ENCODE measurements at regions of chr18 and their contacts with region 1.

Region 1: GRCh38 chr18:35407871-35408481 is 30.8 kb upstream of the ZNF396 start:
- DNase-seq: peak; percentile 68
- H3K4me3 Mint-ChIP-seq: no peak overlapping the region
- H3K27ac Mint-ChIP-seq: peak overlapping the region; percentile 24
- H3K4me1 Mint-ChIP-seq: peaks cover 48% of the 10 kb centered on the region
- H3K27me3 Mint-ChIP-seq: no peaks in the 10 kb centered on the region
- CTCF ChIP-seq: peak; percentile 76

Region 2: DNA sequence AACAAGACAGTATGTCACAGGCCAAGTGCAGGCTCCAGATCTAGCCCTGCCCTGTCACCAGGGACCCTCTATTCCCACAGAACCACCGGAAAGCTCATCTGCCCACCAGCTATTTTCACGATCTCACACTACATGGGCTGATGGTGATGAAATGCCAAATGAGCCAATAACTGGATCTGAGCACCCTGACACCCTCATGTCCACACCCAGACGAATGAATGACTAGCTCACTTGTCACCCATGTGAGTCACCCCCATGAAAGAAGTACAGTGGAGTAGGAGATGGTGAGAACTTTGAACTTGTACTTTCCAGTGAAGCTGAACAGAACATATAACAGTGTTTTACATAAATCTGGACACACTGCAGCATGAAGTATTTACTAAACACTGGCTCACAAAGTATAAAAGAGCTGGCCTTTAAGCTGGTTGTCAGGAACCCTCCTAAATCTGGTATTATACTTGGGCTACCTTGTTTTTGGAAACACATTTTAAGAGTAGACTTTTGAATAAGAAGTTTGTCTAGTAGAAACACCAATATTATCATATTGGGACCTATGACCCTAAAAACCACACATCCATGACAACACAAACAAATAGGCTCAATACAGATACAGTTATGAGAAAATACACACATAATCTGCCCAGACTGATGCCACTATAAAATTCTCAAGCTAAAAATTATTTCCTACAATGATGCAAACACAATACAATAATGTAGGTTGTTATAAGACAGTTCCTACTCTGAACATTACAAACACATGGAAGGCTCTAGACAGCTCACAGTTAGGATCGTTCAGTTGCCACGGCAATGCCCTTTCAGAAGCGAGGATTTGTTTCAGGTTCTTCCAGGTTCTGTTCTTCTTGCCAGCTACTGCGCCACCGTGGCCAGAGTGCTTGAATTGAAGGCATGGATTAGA is 70.8 kb after region 1 on chr18:
- CTCF ChIA-PET with region 1: interaction called, 4 read pairs
- intact Hi-C with region 1: loop called (anchors 2 kb)
- DNase-seq: peak; percentile 78
- H3K4me3 Mint-ChIP-seq: peak overlapping the region; percentile 72
- H3K27ac Mint-ChIP-seq: peak overlapping the region; percentile 100
- H3K4me1 Mint-ChIP-seq: peaks cover 74% of the 10 kb centered on the region
- H3K27me3 Mint-ChIP-seq: no peaks in the 10 kb centered on the region
- CTCF ChIP-seq: no peak

Region 3: GRCh38 chr18:35497370-35498197 is 89.6 kb after region 1 on chr18 and contains the start of gene INO80C:
- CTCF ChIA-PET with region 1: no interaction called
- intact Hi-C with region 1: no loop called
- DNase-seq: peak; percentile 91
- H3K4me3 Mint-ChIP-seq: peak within 1 kb of the TSS; percentile 83
- H3K27ac Mint-ChIP-seq: peak within 1 kb of the TSS; percentile 98
- H3K4me1 Mint-ChIP-seq: peaks cover 32% of the 10 kb centered on the region
- H3K27me3 Mint-ChIP-seq: no peaks in the 10 kb centered on the region
- CTCF ChIP-seq: no peak
- total RNA-seq, gene INO80C: 27.0 and 41.9 TPM in 2 replicates

Region 4: DNA sequence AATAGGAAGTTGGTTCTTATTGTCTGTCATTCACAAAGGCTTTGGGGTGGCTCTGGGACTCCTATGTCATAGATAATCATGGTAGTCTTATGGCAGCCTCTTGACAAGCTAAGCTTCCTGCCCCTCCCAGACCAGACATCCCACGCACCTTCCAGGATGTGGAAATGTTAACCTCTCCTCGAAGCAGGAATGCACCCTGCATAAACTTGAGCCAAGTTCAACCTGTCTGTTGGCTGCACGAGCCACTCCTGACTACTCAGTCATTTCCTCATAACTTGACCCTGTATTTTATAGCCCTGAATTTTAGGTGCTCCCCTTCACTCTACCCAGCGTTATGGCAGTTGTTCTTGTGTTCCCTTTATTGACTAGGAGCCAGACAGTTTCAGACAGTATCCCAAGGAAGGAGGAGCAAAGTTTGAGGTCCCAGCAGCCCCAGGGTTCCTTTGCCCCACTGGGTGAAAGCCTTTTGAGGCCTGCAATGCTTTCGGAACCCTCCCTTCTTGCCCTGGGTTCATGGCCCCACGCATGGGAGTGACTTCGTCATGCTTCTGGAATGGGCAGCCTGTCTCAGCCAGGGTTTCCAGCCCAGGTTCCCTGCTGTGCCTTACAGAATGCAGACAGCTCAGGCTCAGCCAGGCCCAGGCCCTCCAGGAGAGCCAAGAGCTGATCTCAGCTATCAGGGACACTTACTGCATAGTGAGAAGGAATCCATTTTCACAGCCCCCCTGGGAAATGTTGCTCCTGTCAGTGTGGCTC is 105.4 kb after region 1 on chr18:
- CTCF ChIA-PET with region 1: no interaction called
- intact Hi-C with region 1: loop called (anchors 2 kb)
- DNase-seq: peak; percentile 64
- H3K4me3 Mint-ChIP-seq: peak overlapping the region; percentile 51
- H3K27ac Mint-ChIP-seq: peak overlapping the region; percentile 90
- H3K4me1 Mint-ChIP-seq: peaks cover 40% of the 10 kb centered on the region
- H3K27me3 Mint-ChIP-seq: no peaks in the 10 kb centered on the region
- CTCF ChIP-seq: no peak

Region 5: GRCh38 chr18:35580701-35581539 is 172.9 kb after region 1 on chr18:
- CTCF ChIA-PET with region 1: no interaction called
- intact Hi-C with region 1: loop called (anchors 5 kb)
- DNase-seq: peak; percentile 50
- H3K4me3 Mint-ChIP-seq: peak overlapping the region; percentile 65
- H3K27ac Mint-ChIP-seq: no peak overlapping the region
- H3K4me1 Mint-ChIP-seq: peaks cover 53% of the 10 kb centered on the region
- H3K27me3 Mint-ChIP-seq: no peaks in the 10 kb centered on the region
- CTCF ChIP-seq: no peak

Region 6: GRCh38 chr18:35616664-35617423 is 208.9 kb after region 1 on chr18:
- CTCF ChIA-PET with region 1: no interaction called
- intact Hi-C with region 1: loop called (anchors 2 kb)
- DNase-seq: peak; percentile 71
- H3K4me3 Mint-ChIP-seq: no peak overlapping the region
- H3K27ac Mint-ChIP-seq: no peak overlapping the region
- H3K4me1 Mint-ChIP-seq: peaks cover 11% of the 10 kb centered on the region
- H3K27me3 Mint-ChIP-seq: no peaks in the 10 kb centered on the region
- CTCF ChIP-seq: no peak

Region 7: GRCh38 chr18:35703043-35703688 is 295.2 kb after region 1 on chr18:
- CTCF ChIA-PET with region 1: no interaction called
- intact Hi-C with region 1: loop called (anchors 10 kb)
- DNase-seq: no peak
- H3K4me3 Mint-ChIP-seq: no peak overlapping the region
- H3K27ac Mint-ChIP-seq: no peak overlapping the region
- H3K4me1 Mint-ChIP-seq: no peaks in the 10 kb centered on the region
- H3K27me3 Mint-ChIP-seq: no peaks in the 10 kb centered on the region
- CTCF ChIP-seq: no peak